ENCODE measurements at regions of chr13 and their contacts with region 1.

Region 1: DNA sequence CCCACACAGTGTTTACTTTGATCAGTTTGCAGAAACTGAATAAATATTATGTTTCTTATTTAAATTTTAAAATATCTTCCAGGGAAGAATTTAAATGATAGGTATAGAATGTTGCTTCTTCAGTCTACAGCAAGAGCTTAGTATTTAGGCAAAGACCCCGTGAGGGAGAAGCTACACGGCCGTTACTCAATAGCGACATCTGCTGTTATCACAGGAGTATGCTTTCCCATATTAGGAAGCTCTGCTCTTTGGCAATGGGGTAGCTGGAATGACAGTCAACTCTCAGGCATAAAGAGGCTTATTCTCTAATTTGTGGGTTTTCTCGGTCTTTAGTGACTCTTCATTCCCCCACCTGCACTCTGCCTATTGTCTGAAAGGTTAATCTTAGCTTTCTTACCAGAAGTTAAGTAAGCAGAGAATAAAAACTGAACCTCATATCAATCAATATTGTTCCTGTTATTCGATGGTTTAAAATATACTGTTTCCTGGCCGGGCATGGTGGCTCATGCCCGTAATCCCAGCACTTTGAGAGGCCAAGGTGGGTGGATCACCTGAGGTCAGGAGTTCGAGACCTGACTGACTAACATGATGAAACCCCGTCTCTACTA is 13.2 kb upstream of the LHFPL6 start:
- DNase-seq: no peak
- ATAC-seq: peak; percentile 62
- H3K4me3 Mint-ChIP-seq: no peak overlapping the region
- H3K27ac Mint-ChIP-seq: no peak overlapping the region
- H3K4me1 Mint-ChIP-seq: no peaks in the 10 kb centered on the region
- H3K27me3 Mint-ChIP-seq: peaks cover 17% of the 10 kb centered on the region
- CTCF ChIP-seq: peak; percentile 84

Region 2: GRCh38 chr13:38970380-38971051 is 645.7 kb before region 1 on chr13:
- CTCF ChIA-PET with region 1: no interaction called
- POLR2A ChIA-PET with region 1: no interaction called
- intact Hi-C with region 1: loop called (anchors 1 kb)
- DNase-seq: no peak
- ATAC-seq: no peak
- H3K4me3 Mint-ChIP-seq: no peak overlapping the region
- H3K27ac Mint-ChIP-seq: no peak overlapping the region
- H3K4me1 Mint-ChIP-seq: no peaks in the 10 kb centered on the region
- H3K27me3 Mint-ChIP-seq: peaks cover 2% of the 10 kb centered on the region
- CTCF ChIP-seq: no peak

Region 3: DNA sequence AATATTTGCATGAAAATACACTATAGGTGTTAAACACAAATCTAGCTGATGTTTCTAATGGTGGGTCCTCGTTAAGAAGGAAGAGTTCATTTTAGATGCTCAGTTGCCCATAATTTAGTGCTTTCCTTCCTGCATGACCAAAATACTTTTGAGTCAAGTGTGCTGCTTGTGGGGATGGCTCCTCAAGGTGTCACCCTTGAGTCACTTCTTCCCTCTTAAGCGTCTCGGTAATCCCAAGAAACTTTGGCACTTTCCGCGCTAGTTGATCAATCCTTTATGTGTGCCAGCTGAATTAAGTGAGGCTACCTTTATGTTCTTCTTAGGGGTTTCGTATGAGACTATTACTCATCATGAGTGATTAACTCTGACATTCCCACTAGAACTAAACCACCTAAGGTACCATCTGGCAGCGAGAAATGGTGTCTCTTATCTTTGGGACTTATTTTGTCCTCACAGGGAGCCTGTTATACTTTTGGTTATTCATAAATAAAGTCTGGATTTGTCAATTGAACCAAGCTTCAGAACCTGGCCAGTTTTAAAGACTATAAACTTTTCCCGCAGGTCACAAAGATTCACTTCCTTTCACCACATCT is 471.2 kb before region 1 on chr13:
- CTCF ChIA-PET with region 1: interaction called, 7 read pairs
- POLR2A ChIA-PET with region 1: no interaction called
- intact Hi-C with region 1: loop called (anchors 1 kb)
- DNase-seq: no peak
- ATAC-seq: no peak
- H3K4me3 Mint-ChIP-seq: no peak overlapping the region
- H3K27ac Mint-ChIP-seq: no peak overlapping the region
- H3K4me1 Mint-ChIP-seq: no peaks in the 10 kb centered on the region
- H3K27me3 Mint-ChIP-seq: peaks cover 12% of the 10 kb centered on the region
- CTCF ChIP-seq: no peak

Region 4: DNA sequence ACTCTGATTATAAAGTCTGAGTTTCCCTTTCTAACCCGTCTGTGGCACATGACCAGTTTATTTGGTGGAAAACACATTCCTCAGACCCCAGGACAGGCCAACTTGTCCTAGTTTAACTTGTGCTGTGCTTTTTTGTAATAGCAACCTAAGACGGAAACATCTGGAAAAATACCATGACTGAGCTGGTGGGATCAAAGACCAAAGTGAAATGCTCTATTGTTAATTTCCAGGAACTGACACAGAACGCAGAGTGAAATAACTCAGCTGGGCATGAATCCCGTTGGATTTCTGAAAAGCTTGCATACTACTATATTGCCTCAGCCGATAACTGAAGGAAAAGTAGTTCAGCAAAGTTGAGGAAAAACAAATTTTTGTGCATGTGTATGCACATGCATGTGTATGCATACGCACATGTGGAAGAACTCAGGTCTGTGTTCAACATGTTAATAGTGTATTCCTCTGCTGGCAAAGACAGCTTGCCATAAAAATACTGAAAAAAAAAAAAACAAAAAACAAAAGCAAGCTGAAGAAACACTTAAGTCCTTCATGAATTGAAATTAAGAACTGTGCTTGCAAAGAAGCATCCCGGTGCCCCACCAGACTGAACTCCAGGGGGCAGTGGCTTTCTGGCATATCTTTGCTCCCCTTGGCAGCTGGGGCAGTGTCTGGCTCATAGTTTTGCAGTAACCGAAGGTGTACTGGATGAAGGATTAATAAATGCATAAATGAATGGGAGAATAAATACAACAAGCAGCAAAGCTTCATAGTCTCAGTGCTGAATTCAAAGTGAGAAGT is 201.0 kb before region 1 on chr13:
- CTCF ChIA-PET with region 1: interaction called, 3 read pairs
- POLR2A ChIA-PET with region 1: no interaction called
- intact Hi-C with region 1: loop called (anchors 1 kb)
- DNase-seq: no peak
- ATAC-seq: no peak
- H3K4me3 Mint-ChIP-seq: no peak overlapping the region
- H3K27ac Mint-ChIP-seq: no peak overlapping the region
- H3K4me1 Mint-ChIP-seq: no peaks in the 10 kb centered on the region
- H3K27me3 Mint-ChIP-seq: no peaks in the 10 kb centered on the region
- CTCF ChIP-seq: no peak

Region 5: DNA sequence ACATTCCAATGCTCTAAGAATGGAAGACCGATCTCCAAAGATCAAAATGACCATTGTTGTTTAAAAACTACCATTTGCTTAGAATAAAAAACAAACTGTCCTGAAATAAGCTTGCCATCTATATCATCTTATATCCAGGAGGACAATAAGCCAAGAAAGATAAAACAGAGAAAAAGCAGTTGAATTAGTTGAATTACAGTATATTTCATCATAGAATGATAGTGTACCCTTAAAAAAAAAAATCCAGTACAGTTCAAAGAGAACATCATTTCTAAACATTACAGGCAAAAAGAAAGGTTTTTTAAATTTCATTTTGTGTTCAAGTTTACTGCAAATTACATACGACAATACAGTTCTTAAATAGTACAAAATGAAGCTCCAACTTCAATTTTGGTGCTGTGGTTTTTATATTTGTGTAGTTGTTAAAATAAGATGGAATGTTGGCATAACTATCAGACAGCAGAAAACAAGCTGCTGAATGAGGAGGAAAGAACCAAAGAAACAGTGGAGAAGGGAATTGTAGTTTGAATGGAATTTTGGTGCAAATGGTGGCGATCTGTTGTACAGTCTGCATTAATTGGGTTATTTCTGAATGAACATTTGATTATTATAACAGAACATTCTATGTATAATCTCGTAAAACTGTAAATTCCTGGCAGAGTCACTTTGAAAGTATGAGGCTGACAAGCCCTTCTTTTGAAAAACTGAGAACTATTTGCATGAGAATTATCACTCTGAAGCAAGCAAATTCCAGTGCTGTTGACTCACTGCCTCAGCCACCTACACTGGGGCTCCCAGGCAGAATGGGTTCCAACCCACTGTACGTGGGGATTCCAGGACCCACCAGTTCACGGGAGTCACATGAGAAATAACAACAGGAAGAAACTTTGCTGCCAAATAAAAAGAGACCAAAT is 50.9 kb before region 1 on chr13:
- CTCF ChIA-PET with region 1: no interaction called
- POLR2A ChIA-PET with region 1: no interaction called
- intact Hi-C with region 1: no loop called
- DNase-seq: no peak
- ATAC-seq: no peak
- H3K4me3 Mint-ChIP-seq: no peak overlapping the region
- H3K27ac Mint-ChIP-seq: no peak overlapping the region
- H3K4me1 Mint-ChIP-seq: no peaks in the 10 kb centered on the region
- H3K27me3 Mint-ChIP-seq: no peaks in the 10 kb centered on the region
- CTCF ChIP-seq: no peak

Region 6: DNA sequence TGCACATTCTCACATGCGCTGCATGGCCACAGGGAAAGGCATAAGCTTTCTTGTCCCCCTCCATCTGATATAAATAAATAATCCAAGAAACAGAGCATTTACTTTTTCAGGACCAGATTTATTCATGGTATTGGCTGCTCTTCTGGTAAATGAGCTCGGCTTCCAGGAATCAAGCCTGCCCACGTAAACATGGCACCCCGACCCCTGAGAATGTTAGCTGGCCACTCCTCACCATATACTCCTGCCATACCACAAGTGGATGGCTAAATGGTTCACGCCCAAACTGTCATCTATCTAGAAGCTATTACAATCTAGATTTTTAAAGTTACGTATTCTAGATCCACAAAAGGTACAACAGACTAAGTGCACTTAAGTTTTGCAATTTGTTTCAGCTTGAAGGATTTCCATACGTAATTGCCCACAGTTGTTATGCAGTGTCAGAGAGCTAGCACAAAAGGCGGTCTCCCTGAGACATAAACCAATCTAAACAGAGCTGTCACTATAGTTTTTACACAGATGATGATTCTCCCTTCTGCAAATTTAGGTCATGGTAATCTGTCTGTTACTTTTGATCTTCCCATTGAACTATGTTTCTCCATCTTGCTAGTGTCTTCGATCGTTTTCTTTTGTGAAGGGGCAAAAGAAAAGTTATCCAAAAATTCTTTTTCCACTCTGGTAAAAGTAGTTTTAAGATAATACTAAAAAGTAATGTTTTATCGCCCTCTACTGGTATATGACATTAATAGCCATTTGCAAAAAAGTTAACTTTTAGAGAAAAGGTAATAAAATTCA is 1066.5 kb after region 1 on chr13:
- CTCF ChIA-PET with region 1: no interaction called
- POLR2A ChIA-PET with region 1: no interaction called
- intact Hi-C with region 1: loop called (anchors 5 kb)
- DNase-seq: no peak
- ATAC-seq: no peak
- H3K4me3 Mint-ChIP-seq: no peak overlapping the region
- H3K27ac Mint-ChIP-seq: no peak overlapping the region
- H3K4me1 Mint-ChIP-seq: peaks cover 24% of the 10 kb centered on the region
- H3K27me3 Mint-ChIP-seq: no peaks in the 10 kb centered on the region
- CTCF ChIP-seq: no peak